ENCODE measurements at regions of chr19 and their contacts with region 1.

Region 1: GRCh38 chr19:41449079-41449864 is 6.3 kb downstream of the ERICH4 start:
- DNase-seq: peak; percentile 80
- H3K4me3 Mint-ChIP-seq: peak overlapping the region; percentile 59
- H3K27ac Mint-ChIP-seq: no peak overlapping the region
- H3K4me1 Mint-ChIP-seq: peaks cover 30% of the 10 kb centered on the region
- H3K27me3 Mint-ChIP-seq: peaks cover 40% of the 10 kb centered on the region

Region 2: DNA sequence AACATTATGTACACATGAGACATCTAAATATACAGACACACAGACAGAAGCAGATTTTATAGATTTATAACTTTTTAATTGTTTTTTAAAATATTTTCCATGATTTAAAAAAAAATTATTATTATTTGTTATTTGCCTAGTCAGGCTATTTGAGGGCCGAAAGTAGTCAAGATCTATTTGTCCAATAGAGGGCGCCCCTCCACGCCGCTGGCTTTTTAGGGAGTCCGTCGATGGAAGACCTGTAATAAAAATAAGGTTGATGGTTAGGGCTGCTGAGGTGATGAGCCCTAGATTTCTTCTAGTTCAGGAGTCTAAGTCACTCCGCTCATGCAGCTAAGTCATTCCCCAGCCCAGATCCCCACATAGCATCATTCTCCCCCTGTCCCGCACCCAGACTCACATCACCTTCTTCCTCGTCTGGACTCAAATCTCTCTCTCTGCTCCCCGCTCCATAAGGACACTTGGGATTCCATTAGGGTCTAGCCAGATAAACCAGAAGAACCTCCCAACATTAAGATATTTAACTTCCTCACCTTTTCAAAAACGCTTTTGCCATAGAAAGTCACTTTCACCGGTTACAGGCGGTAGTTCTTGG is 92.8 kb after region 1 on chr19:
- CTCF ChIA-PET with region 1: interaction called, 80 read pairs
- DNase-seq: peak; percentile 86
- H3K4me3 Mint-ChIP-seq: peak overlapping the region; percentile 33
- H3K27ac Mint-ChIP-seq: peak overlapping the region; percentile 78
- H3K4me1 Mint-ChIP-seq: peaks cover 58% of the 10 kb centered on the region
- H3K27me3 Mint-ChIP-seq: peaks cover 5% of the 10 kb centered on the region

Region 3: DNA sequence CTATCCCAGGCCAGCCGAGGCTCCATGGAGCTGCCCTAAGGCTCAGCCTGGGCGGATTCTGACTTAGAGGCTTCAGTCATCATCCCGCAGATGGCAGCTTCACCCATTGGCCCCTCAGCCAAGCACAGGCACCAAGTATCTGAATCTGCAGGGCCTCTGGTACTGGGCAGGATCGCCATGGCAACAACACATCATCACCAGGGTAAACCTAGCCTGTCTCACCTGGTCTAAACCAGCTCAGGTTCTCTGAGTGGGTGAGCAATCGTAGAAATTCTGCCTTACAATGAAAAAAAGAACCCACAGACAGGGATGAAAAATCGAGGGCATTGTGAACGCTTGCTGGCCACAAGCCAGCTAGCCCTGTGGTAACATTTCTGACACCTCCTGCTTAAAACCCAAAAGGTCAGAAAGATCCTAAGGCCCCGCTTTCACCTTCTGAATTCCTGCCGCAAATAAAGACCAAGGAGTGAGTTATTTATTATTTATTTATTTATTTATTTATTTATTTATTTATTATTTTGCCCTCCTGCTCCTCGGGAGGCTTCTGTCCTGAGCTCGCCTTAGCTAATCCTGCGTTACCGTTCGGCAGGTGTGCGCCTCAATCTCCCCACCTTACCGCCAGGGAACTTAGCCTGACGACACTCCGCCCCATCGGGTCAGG is 114.7 kb after region 1 on chr19:
- CTCF ChIA-PET with region 1: interaction called, 107 read pairs
- DNase-seq: peak; percentile 71
- H3K4me3 Mint-ChIP-seq: peak overlapping the region; percentile 68
- H3K27ac Mint-ChIP-seq: peak overlapping the region; percentile 69
- H3K4me1 Mint-ChIP-seq: peaks cover 84% of the 10 kb centered on the region
- H3K27me3 Mint-ChIP-seq: peaks cover 11% of the 10 kb centered on the region

Region 4: DNA sequence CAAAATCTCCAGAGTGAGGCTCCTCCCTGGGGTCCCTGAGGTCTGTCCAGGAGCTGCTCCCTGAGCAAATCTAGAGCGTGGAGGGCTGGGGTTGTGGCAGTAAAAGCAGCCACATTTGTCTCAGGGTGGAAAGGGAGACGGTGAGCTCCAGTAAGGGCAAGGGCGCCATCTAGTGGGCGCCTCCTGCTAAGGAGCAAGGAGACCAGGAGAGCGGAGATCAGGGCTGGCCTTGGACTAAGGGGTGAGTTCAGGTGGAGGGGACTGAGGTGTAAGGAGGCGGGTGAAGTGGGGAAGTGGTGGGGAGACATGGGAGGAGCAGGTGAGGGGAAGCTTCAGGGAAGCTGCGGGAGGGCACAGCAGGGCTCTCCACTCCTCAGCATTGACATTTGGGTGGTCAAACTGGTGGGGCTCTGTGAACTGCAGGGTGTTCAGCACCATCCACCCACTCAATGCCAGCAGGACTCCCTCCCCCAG is 121.4 kb after region 1 on chr19:
- CTCF ChIA-PET with region 1: interaction called, 107 read pairs
- DNase-seq: peak; percentile 89
- H3K4me3 Mint-ChIP-seq: no peak overlapping the region
- H3K27ac Mint-ChIP-seq: peak overlapping the region; percentile 3
- H3K4me1 Mint-ChIP-seq: peaks cover 51% of the 10 kb centered on the region
- H3K27me3 Mint-ChIP-seq: no peaks in the 10 kb centered on the region

Region 5: GRCh38 chr19:41575998-41576397 is 126.7 kb after region 1 on chr19 and contains the start of gene CEACAM21:
- CTCF ChIA-PET with region 1: interaction called, 107 read pairs
- DNase-seq: peak; percentile 80
- H3K4me3 Mint-ChIP-seq: peak within 1 kb of the TSS; percentile 76
- H3K27ac Mint-ChIP-seq: peak within 1 kb of the TSS; percentile 84
- H3K4me1 Mint-ChIP-seq: peaks cover 32% of the 10 kb centered on the region
- H3K27me3 Mint-ChIP-seq: no peaks in the 10 kb centered on the region

Region 6: GRCh38 chr19:41597600-41598041 is 148.3 kb after region 1 on chr19:
- CTCF ChIA-PET with region 1: interaction called, 85 read pairs
- DNase-seq: peak; percentile 86
- H3K4me3 Mint-ChIP-seq: no peak overlapping the region
- H3K27ac Mint-ChIP-seq: no peak overlapping the region
- H3K4me1 Mint-ChIP-seq: peaks cover 12% of the 10 kb centered on the region
- H3K27me3 Mint-ChIP-seq: peaks cover 47% of the 10 kb centered on the region